Activated CD8-positive, alpha-beta memory T cell treated with anti-CD3 and anti-CD28 coated beads, Interleukin-2, amount 10 ng/mL, durations not matched to agents 7 days and 5 days (primary cell): ENCODE measurements at regions of chr11 and their contacts with region 1.

Region 1: DNA sequence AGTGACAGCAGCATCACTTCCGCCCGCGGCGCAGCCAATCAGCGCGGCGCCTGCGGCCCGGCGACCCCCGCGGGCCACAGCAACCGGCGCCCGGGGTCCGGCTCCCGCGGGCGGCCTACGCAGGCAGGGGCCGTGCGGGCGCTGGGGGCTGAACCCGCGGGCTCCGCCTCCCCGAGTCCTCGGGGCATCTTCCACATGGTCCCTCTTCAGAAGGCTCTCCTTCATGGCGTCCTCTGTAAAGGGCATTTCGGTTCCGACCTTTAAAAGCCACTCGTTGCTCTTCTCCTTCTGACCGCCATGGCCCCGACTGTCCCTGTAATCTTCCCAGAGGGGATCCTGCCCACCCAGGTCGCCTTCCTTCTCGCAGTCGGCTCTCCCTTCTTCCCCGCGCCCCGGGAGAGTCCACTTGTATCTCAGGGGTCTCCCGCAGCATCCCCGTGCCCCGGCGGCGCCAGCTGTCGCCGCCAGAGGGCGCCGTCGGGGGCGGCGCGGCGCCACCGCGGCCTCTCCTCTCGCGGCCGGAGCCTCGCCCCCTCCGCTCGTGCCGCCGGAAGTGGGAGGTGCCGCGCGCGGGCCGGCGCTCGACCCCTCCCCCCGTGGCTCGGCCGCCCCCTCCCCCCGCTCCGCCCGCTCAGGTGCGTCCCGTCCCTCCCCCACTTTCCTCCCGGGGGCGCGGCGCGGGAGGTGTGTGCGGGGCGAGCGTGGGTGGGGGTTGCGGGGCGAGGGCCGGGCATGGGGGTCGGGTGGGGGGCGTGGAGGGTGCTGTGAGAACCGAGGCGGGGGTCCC is at the start of gene RNF214:
- DNase-seq: peak; percentile 82
- ATAC-seq: peak; percentile 76
- H3K4me3 Mint-ChIP-seq: peak within 1 kb of the TSS; percentile 92
- H3K27ac Mint-ChIP-seq: peak within 1 kb of the TSS; percentile 99
- H3K4me1 Mint-ChIP-seq: peaks cover 43% of the 10 kb centered on the region
- H3K27me3 Mint-ChIP-seq: no peaks in the 10 kb centered on the region
- total RNA-seq, gene RNF214: 18.5 to 20.5 TPM

Region 2: GRCh38 chr11:117143871-117144476 is 88.3 kb before region 1 on chr11 and contains the start of gene PAFAH1B2:
- CTCF ChIA-PET with region 1: interaction called, 15 read pairs
- DNase-seq: peak; percentile 97
- ATAC-seq: peak; percentile 94
- H3K4me3 Mint-ChIP-seq: peak within 1 kb of the TSS; percentile 100
- H3K27ac Mint-ChIP-seq: peak within 1 kb of the TSS; percentile 88
- H3K4me1 Mint-ChIP-seq: peaks cover 39% of the 10 kb centered on the region
- H3K27me3 Mint-ChIP-seq: peaks cover 24% of the 10 kb centered on the region
- total RNA-seq, gene PAFAH1B2: 54.5 to 66.4 TPM

Region 3: DNA sequence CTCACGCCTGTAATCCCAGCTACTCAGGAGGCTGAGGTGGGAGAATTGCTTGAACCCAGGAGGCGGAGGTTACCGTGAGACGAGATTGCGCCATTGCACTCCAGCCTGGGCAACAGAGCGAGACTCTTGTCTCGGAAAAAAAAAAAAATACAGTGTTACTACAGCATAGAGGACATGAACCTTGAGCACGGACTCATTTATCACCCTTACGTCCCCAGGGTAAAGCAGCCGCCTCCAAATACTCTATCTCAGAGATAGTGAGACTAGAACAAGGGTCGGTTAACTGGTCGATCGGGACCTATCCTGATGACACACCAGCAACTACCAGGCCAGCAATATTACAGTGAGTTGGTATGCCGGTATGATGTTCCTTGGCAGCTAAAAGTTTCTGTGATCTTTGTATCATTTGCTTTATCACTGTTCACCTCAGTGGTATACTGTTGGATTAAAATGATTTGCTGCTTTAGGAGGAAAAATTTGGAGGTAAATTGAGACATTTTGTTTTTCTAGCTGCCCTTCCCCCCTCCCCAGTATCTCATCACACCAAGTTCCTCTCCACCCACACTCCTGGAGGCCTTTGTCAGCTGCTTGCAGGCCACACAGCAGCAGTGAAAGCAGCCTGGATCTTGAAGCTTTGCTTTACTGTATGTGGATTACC is 60.8 kb before region 1 on chr11:
- CTCF ChIA-PET with region 1: interaction called, 13 read pairs
- DNase-seq: no peak
- ATAC-seq: no peak
- H3K4me3 Mint-ChIP-seq: no peak overlapping the region
- H3K27ac Mint-ChIP-seq: no peak overlapping the region
- H3K4me1 Mint-ChIP-seq: peaks cover 4% of the 10 kb centered on the region
- H3K27me3 Mint-ChIP-seq: no peaks in the 10 kb centered on the region

Region 4: DNA sequence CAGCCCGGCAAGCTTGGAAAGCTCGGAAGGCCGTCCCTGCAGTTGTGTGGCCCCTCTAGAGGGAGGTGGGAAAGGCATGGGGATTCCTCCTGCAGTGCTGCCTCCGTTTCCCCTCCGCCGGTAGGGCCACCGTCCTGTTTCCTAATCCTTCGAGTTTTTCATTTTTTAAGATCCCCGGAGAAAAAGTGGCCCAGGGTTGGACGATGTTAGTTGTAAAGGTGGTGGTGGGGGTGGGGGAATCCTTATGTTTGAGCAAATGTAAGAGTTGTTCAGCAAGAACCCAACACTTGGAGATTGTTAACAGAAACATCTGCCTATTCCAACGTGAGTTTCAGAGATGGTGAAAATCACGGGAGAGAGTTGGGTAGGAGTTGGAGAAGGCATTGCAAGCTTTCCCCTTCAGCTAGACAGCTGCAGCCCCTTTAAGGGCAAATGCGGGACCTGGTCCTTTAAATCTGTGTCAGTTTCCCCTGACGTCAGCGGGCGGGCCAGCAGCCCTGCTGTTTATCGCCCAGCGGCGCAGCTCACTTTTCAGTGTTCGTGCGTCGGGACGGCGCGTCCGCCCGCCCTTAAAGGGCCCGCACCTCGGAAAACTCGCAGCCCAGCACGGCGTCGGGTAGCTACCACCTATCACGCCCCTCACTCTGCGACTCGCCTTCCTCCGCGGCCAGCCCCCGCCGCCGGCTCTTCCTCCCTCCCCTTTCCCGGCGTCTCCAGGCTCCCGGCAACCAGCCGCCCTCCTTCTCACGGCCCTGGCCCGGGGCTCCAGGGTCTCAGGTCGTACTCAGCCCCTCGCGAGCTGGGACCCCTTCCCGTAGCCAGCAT is 53.9 kb before region 1 on chr11 and contains the start of gene SIDT2:
- CTCF ChIA-PET with region 1: interaction called, 108 read pairs
- DNase-seq: peak; percentile 95
- ATAC-seq: peak; percentile 96
- H3K4me3 Mint-ChIP-seq: peak within 1 kb of the TSS; percentile 90
- H3K27ac Mint-ChIP-seq: peak within 1 kb of the TSS; percentile 85
- H3K4me1 Mint-ChIP-seq: peaks cover 33% of the 10 kb centered on the region
- H3K27me3 Mint-ChIP-seq: no peaks in the 10 kb centered on the region
- total RNA-seq, gene SIDT2: 18.9 to 21.3 TPM

Region 5: GRCh38 chr11:117295438-117296137 is 63.3 kb after region 1 on chr11:
- CTCF ChIA-PET with region 1: no interaction called
- DNase-seq: no peak
- ATAC-seq: no peak
- H3K4me3 Mint-ChIP-seq: no peak overlapping the region
- H3K27ac Mint-ChIP-seq: no peak overlapping the region
- H3K4me1 Mint-ChIP-seq: no peaks in the 10 kb centered on the region
- H3K27me3 Mint-ChIP-seq: no peaks in the 10 kb centered on the region

Region 6: GRCh38 chr11:117327567-117328374 is 95.5 kb after region 1 on chr11 and contains the start of gene CEP164:
- CTCF ChIA-PET with region 1: interaction called, 12 read pairs
- DNase-seq: peak; percentile 98
- ATAC-seq: peak; percentile 98
- H3K4me3 Mint-ChIP-seq: peak within 1 kb of the TSS; percentile 57
- H3K27ac Mint-ChIP-seq: peak within 1 kb of the TSS; percentile 50
- H3K4me1 Mint-ChIP-seq: peaks cover 7% of the 10 kb centered on the region
- H3K27me3 Mint-ChIP-seq: peaks cover 8% of the 10 kb centered on the region
- total RNA-seq, gene CEP164: 36.0 to 38.6 TPM